ENCODE measurements at regions of chr2 and their contacts with region 1.

Region 1: GRCh38 chr2:55010149-55010591 is 40.1 kb downstream of the RTN4 start:
- DNase-seq: peak; percentile 63
- H3K4me3 Mint-ChIP-seq: peak overlapping the region; percentile 77
- H3K27ac Mint-ChIP-seq: peak overlapping the region; percentile 76
- H3K4me1 Mint-ChIP-seq: peaks cover 56% of the 10 kb centered on the region
- H3K27me3 Mint-ChIP-seq: no peaks in the 10 kb centered on the region
- CTCF ChIP-seq: no peak

Region 2: GRCh38 chr2:54712516-54712915 is 297.7 kb before region 1 on chr2:
- CTCF ChIA-PET with region 1: no interaction called
- POLR2A ChIA-PET with region 1: no interaction called
- intact Hi-C with region 1: no loop called
- DNase-seq: no peak
- H3K4me3 Mint-ChIP-seq: no peak overlapping the region
- H3K27ac Mint-ChIP-seq: no peak overlapping the region
- H3K4me1 Mint-ChIP-seq: no peaks in the 10 kb centered on the region
- H3K27me3 Mint-ChIP-seq: no peaks in the 10 kb centered on the region
- CTCF ChIP-seq: no peak

Region 3: DNA sequence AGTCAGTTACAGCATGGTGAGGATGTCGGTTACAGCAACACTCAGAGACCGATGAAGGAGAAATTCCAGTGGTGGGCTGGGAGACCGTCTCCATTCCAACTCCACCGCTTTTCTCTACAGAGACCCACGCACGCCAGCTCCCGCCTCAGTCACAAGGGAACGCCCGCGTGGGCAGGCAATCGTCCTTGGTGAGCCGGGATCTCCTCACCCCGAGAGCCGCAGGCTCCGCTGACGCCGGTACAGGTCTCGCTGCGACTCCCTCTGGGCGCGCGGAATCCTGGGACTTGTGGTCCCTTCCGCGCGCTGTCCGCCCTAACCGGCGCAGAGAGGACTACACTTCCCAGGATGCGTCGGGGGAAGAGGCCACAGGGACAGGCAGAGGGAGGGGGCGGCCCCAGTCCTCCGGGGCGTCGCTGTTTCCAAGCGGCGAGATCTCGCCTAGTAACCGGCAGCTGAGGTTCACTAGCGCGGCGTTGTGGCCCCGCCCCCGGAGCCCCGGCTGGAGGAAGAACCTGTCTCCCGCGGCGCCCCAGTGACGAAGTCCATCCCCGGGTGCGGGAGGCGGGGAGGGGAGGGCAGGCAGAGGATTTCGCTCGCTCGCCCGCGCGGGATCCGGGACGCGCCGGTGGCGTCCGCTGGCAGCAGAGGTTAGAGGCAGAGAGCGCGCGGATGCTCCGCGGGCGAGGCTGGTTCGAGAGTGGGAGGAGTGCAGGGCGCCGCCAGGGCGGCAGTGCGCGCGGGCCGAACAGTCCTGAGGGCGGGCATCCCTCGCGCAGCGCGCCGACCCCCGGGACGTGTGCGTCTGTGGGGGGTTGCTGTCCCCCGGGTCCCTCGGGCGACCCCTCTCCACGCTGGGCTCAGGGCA is 286.8 kb before region 1 on chr2 and contains the start of gene EML6:
- CTCF ChIA-PET with region 1: interaction called, 4 read pairs
- POLR2A ChIA-PET with region 1: interaction called, 22 read pairs
- intact Hi-C with region 1: no loop called
- DNase-seq: peak; percentile 99
- H3K4me3 Mint-ChIP-seq: peak within 1 kb of the TSS; percentile 87
- H3K27ac Mint-ChIP-seq: peak within 1 kb of the TSS; percentile 77
- H3K4me1 Mint-ChIP-seq: peaks cover 23% of the 10 kb centered on the region
- H3K27me3 Mint-ChIP-seq: no peaks in the 10 kb centered on the region
- CTCF ChIP-seq: no peak
- total RNA-seq, gene EML6: 0.77 and 1.7 TPM in 2 replicates

Region 4: GRCh38 chr2:54755641-54756326 is 254.4 kb before region 1 on chr2:
- CTCF ChIA-PET with region 1: interaction called, 3 read pairs
- POLR2A ChIA-PET with region 1: no interaction called
- intact Hi-C with region 1: loop called (anchors 5 kb)
- DNase-seq: peak; percentile 47
- H3K4me3 Mint-ChIP-seq: peak overlapping the region; percentile 15
- H3K27ac Mint-ChIP-seq: peak overlapping the region; percentile 6
- H3K4me1 Mint-ChIP-seq: peaks cover 9% of the 10 kb centered on the region
- H3K27me3 Mint-ChIP-seq: no peaks in the 10 kb centered on the region
- CTCF ChIP-seq: peak; percentile 29

Region 5: GRCh38 chr2:54966165-54966832 is 43.9 kb before region 1 on chr2:
- CTCF ChIA-PET with region 1: interaction called, 11 read pairs
- POLR2A ChIA-PET with region 1: interaction called, 13 read pairs
- intact Hi-C with region 1: no loop called
- DNase-seq: peak; percentile 76
- H3K4me3 Mint-ChIP-seq: peak overlapping the region; percentile 12
- H3K27ac Mint-ChIP-seq: peak overlapping the region; percentile 68
- H3K4me1 Mint-ChIP-seq: peaks cover 45% of the 10 kb centered on the region
- H3K27me3 Mint-ChIP-seq: no peaks in the 10 kb centered on the region
- CTCF ChIP-seq: no peak

Region 6: GRCh38 chr2:54983345-54984260 is 26.6 kb before region 1 on chr2:
- CTCF ChIA-PET with region 1: interaction called, 5 read pairs
- POLR2A ChIA-PET with region 1: interaction called, 10 read pairs
- intact Hi-C with region 1: no loop called
- DNase-seq: peak; percentile 49
- H3K4me3 Mint-ChIP-seq: peak overlapping the region; percentile 16
- H3K27ac Mint-ChIP-seq: peak overlapping the region; percentile 32
- H3K4me1 Mint-ChIP-seq: peaks cover 43% of the 10 kb centered on the region
- H3K27me3 Mint-ChIP-seq: no peaks in the 10 kb centered on the region
- CTCF ChIP-seq: no peak

Region 7: DNA sequence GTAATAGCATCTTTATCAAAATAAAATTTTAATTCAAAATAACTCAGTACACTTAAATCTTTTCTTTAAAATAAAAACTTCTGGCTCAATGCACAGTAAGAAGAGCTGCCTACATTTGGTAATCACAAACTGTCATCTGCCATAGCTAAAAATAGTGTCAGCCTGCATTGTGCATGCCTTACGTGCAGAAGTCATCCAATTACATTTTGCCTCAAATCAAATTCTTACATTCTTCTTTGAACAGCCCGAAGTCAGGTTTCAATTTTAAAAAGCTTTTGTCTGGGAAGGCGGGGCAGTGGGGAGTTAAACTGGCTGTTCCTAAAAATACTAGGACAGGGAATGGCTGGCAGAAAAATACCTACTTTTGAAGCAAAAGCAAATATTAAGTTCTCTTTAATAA is 11.0 kb before region 1 on chr2:
- CTCF ChIA-PET with region 1: interaction called, 10 read pairs
- POLR2A ChIA-PET with region 1: interaction called, 58 read pairs
- intact Hi-C with region 1: no loop called
- DNase-seq: peak; percentile 68
- H3K4me3 Mint-ChIP-seq: peak overlapping the region; percentile 62
- H3K27ac Mint-ChIP-seq: peak overlapping the region; percentile 85
- H3K4me1 Mint-ChIP-seq: peaks cover 49% of the 10 kb centered on the region
- H3K27me3 Mint-ChIP-seq: no peaks in the 10 kb centered on the region
- CTCF ChIP-seq: no peak

Region 8: DNA sequence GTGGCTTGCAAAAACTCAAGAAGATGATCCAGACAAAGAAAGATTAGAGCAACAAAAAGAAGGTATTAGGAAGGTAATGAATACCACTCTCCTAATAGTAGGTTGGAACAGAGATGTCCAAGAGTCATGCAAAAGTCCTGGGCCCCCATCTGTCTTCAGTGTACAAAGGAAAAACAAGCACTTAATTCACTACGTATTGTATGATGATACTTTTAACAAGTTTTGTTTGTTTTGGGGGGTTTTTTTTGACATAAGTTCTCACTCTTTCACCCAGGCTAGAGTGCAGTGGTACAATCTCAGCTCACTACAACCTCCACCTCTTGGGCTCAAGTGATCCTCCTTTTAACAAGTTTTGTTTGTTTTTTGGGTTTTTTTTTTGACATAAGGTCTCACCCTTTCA is 120.7 kb after region 1 on chr2:
- CTCF ChIA-PET with region 1: no interaction called
- POLR2A ChIA-PET with region 1: no interaction called
- intact Hi-C with region 1: no loop called
- DNase-seq: no peak
- H3K4me3 Mint-ChIP-seq: no peak overlapping the region
- H3K27ac Mint-ChIP-seq: no peak overlapping the region
- H3K4me1 Mint-ChIP-seq: no peaks in the 10 kb centered on the region
- H3K27me3 Mint-ChIP-seq: no peaks in the 10 kb centered on the region
- CTCF ChIP-seq: no peak

Region 9: DNA sequence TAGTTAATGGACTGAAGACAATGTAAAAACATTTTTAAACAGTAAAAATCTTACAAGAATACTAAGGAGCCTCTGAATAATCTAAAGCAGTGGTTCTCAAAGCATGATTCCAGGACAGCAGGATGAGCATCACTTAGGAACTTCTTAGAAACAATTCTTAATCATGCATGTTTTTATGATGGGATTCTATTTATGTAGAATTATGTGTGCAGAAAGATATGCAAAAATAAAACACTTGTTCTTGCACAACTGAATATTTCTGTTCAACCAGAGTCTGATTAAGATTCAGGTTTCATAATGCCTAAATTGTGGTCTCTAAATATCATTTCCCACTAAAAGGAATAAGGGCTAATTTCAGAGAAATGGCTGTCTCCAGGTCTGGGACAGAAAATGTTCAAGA is 328.1 kb after region 1 on chr2:
- CTCF ChIA-PET with region 1: no interaction called
- POLR2A ChIA-PET with region 1: no interaction called
- intact Hi-C with region 1: no loop called
- DNase-seq: no peak
- H3K4me3 Mint-ChIP-seq: no peak overlapping the region
- H3K27ac Mint-ChIP-seq: no peak overlapping the region
- H3K4me1 Mint-ChIP-seq: no peaks in the 10 kb centered on the region
- H3K27me3 Mint-ChIP-seq: no peaks in the 10 kb centered on the region
- CTCF ChIP-seq: no peak